A673 (cell line): ENCODE measurements at regions of chr6 and their contacts with region 1.

Region 1: DNA sequence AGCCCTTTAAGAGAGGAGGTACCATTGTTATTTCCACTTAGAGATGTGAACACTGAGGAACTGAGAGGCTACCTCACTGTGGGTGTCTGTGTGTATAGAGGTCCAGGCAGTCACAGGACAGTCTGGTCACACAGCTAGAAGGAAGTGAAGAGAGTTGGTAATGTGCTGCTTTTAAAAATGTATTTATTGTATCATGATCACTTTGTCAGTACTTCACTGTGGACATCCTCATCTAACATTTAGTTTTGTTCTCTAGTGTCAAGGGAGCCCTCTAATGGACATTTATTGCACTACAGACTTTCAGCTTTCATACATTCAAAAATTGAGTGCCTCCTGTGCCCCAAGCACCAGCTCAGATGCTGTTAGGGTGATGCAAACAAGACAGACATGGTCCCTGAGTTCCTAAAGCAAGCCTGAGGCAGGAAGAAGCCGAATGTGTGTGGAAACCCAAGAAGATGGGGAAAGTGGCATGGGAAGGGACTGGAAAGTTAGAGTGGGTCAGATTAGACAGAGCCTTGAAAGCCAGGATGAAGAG is 123.0 kb downstream of the SLC16A10 start:
- DNase-seq: peak; percentile 71
- H3K4me3 ChIP-seq: no peak overlapping the region
- H3K27ac ChIP-seq: no peak overlapping the region
- H3K4me1 ChIP-seq: no peaks in the 10 kb centered on the region
- H3K27me3 ChIP-seq: no peaks in the 10 kb centered on the region
- CTCF ChIP-seq: peak; percentile 82

Region 2: DNA sequence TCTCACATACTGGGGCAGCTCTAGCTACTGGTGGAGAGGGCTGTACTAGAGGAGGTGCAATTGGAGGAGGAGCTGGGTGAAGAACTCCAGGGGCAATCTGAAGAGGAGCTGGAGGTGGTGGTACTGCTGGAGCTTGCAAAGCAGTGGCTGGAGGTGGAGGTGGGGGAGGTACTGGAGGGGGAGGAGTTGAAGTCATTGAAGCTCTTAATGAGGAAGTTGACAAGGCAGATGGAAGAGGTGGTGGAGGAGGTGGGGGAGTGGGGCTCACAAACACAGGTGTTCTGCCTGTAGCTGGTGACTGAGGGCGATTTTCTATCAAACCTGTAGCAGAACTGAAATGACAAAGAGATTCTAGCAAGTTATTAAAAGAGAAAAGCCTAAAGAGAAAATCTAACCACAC is 1108.4 kb before region 1 on chr6:
- CTCF ChIA-PET with region 1: no interaction called
- POLR2A ChIA-PET with region 1: no interaction called
- intact Hi-C with region 1: no loop called
- DNase-seq: no peak
- H3K4me3 ChIP-seq: no peak overlapping the region
- H3K27ac ChIP-seq: no peak overlapping the region
- H3K4me1 ChIP-seq: peaks cover 10% of the 10 kb centered on the region
- H3K27me3 ChIP-seq: no peaks in the 10 kb centered on the region
- CTCF ChIP-seq: no peak

Region 3: GRCh38 chr6:110971468-110971867 is 238.8 kb before region 1 on chr6:
- CTCF ChIA-PET with region 1: no interaction called
- POLR2A ChIA-PET with region 1: no interaction called
- intact Hi-C with region 1: no loop called
- DNase-seq: no peak
- H3K4me3 ChIP-seq: no peak overlapping the region
- H3K27ac ChIP-seq: no peak overlapping the region
- H3K4me1 ChIP-seq: no peaks in the 10 kb centered on the region
- H3K27me3 ChIP-seq: no peaks in the 10 kb centered on the region
- CTCF ChIP-seq: no peak

Region 4: DNA sequence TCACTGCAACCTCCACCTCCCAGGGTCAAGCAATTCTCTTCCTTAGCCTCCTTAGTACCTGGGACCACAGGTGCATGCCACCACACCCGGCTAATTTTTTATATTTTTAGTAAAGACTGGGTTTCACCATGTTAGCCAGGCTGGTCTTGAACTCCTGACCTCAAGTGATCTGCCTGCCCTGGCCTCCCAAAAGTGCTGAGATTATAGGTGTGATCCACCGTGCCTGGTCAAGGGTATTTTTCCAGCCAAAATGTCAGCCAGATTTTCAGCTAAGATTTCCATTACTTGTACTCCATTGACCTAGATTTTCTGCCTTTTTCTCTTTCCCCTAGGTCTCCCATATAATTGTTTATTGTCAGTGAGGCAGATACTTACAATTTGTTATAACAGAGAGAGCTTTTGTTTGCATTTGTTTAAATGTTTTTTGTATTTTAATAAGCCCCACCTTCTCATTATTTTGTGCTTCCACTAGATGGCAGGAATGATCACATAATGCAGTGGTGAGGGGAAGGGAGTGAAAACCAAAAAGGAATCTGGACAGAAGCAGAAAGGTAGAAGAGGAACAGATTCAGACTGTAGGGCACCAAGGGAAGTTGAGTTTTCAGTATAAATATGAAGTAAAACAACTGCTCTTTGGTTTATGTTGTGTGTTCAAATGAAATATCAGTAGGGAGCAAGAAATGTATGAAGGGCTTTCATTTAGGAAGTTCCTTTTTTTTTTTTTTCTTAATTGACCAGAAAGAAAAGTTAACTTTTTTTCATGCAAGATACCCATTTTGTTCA is 198.7 kb before region 1 on chr6:
- CTCF ChIA-PET with region 1: interaction called, 3 read pairs
- POLR2A ChIA-PET with region 1: no interaction called
- intact Hi-C with region 1: loop called (anchors 1 kb)
- DNase-seq: peak; percentile 67
- H3K4me3 ChIP-seq: no peak overlapping the region
- H3K27ac ChIP-seq: no peak overlapping the region
- H3K4me1 ChIP-seq: no peaks in the 10 kb centered on the region
- H3K27me3 ChIP-seq: no peaks in the 10 kb centered on the region
- CTCF ChIP-seq: peak; percentile 75

Region 5: DNA sequence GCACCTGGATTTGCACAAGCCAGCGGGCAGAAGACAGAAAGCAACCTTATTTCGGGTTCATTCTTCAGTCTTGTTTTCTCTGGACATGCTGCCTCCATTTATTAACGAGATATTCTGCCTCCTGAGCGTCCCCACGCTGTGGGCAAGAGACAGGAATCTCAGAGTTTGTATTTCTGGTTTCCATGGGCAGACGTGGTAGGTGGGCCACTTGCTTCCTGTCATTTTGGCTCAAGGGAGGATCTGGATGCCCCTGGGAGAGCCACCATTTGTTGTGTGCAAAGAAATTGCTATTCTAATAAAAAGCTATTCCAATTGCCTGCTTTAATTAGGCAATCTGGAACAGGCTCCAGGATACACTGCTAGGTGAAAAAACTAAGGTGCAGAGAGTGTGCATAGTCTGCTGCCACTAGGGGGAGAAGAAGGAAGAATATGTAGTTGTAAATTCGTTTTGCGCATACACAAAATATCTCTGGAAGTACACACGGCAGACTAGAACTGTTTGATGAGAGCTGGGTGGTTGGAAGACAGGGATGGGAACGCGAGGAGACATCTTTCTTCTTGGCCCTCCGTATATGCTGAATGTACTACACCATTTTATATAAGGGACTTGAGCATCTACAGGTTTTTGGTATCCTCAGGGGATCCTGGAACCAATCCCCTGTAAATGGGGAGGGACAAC is 153.0 kb before region 1 on chr6:
- CTCF ChIA-PET with region 1: interaction called, 16 read pairs
- POLR2A ChIA-PET with region 1: no interaction called
- intact Hi-C with region 1: loop called (anchors 1 kb)
- DNase-seq: peak; percentile 72
- H3K4me3 ChIP-seq: no peak overlapping the region
- H3K27ac ChIP-seq: no peak overlapping the region
- H3K4me1 ChIP-seq: no peaks in the 10 kb centered on the region
- H3K27me3 ChIP-seq: no peaks in the 10 kb centered on the region
- CTCF ChIP-seq: peak; percentile 91